ENCODE measurements at regions of chr4 and their contacts with region 1.

Region 1: GRCh38 chr4:112348488-112349158 is 51.5 kb downstream of the ALPK1 start:
- DNase-seq: peak; percentile 60
- ATAC-seq: peak; percentile 79
- H3K4me3 ChIP-seq: no peak overlapping the region
- H3K27ac ChIP-seq: no peak overlapping the region
- H3K4me1 ChIP-seq: no peaks in the 10 kb centered on the region
- H3K27me3 ChIP-seq: no peaks in the 10 kb centered on the region
- CTCF ChIP-seq: peak; percentile 49

Region 2: GRCh38 chr4:111744847-111745246 is 603.8 kb before region 1 on chr4:
- CTCF ChIA-PET with region 1: no interaction called
- POLR2A ChIA-PET with region 1: no interaction called
- intact Hi-C with region 1: no loop called
- DNase-seq: no peak
- ATAC-seq: no peak
- H3K4me3 ChIP-seq: no peak overlapping the region
- H3K27ac ChIP-seq: no peak overlapping the region
- H3K4me1 ChIP-seq: no peaks in the 10 kb centered on the region
- H3K27me3 ChIP-seq: peaks cover 18% of the 10 kb centered on the region
- CTCF ChIP-seq: no peak

Region 3: DNA sequence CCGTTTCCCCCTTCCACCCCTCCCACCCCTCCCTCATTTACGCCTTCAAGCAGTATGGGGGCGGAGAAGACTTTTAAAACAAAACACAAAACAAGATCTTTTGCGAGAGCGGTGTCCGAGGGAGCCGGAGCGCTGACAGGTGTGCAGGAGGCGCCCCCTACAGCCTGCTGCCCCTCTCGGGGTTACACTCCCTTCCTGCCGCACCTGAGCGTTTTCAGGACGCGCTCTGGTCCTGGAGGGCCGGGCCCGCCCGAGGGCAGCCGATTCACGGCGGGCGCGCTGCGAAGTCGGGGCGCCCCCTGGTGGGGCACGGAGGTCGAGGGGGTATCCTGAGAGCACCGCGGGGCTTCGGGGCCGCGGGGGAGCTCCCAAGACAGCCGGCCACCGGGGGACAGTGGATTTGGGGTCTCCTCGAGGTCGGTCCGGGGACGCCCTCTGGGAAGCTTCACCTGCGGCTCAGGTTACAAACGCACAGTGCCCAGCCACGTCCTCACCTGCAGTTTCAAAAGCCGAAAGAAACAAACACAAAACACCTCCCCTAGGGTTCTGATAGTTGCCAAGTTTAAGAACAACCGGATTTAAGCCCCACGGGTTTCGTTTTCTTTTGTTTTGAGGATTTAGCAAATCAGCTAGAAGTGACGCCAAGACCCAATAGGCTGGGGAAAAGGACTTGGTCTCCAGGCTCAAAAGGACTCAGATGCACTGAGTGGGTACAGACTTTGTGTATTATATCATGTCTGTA is 175.3 kb after region 1 on chr4:
- CTCF ChIA-PET with region 1: no interaction called
- POLR2A ChIA-PET with region 1: no interaction called
- intact Hi-C with region 1: loop called (anchors 2 kb)
- DNase-seq: peak; percentile 71
- ATAC-seq: peak; percentile 92
- H3K4me3 ChIP-seq: peak overlapping the region; percentile 79
- H3K27ac ChIP-seq: no peak overlapping the region
- H3K4me1 ChIP-seq: no peaks in the 10 kb centered on the region
- H3K27me3 ChIP-seq: peaks cover 16% of the 10 kb centered on the region
- CTCF ChIP-seq: peak; percentile 83

Region 4: GRCh38 chr4:112604589-112604988 is 256.0 kb after region 1 on chr4:
- CTCF ChIA-PET with region 1: no interaction called
- POLR2A ChIA-PET with region 1: no interaction called
- intact Hi-C with region 1: loop called (anchors 5 kb)
- DNase-seq: peak; percentile 55
- ATAC-seq: peak; percentile 88
- H3K4me3 ChIP-seq: no peak overlapping the region
- H3K27ac ChIP-seq: no peak overlapping the region
- H3K4me1 ChIP-seq: no peaks in the 10 kb centered on the region
- H3K27me3 ChIP-seq: no peaks in the 10 kb centered on the region
- CTCF ChIP-seq: peak; percentile 64